ENCODE measurements at regions of chr11 and their contacts with region 1.

Region 1: DNA sequence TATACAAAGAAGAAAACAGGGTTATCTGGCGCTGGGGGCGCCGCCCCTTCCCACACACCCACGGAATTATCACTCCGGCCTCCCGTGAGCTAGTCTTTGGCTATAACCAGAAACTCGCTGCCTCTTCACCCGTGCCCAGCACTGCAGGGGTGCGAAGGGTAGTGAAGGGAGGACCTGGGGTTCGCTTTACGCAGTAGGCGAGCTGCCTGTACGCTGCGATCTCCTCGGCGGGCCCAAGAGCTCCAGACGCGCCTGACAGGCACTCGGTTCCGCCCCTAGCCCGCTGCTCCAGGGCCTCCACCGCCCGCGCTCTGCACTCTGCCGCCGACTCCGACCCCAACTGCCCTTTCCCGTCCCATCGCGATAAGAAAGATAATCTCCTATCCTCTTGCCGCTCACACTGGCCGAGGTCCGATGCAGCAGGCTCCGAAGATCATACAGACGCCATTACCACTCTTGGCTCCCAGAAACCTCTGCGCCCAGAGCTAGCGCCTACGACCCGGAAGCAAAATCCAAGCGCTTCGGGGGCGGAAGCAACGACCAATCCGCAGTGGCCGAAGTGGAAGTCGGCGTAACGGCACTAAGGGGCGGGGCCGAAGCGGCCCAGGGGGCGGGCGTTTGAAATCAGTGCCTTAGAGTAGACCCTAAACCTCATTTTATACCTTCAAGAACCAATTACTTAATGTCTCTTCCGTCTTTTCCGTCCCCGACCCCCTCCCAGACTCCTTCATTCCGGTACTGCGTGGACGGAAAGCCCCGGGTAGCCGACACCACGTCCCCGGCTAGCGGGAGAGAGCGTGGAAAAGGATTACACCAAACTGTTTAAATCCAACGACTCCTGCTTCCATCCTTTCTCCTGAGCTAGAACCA is at the starts of genes CWC15 and KDM4D:
- DNase-seq: peak; percentile 90 to 97 (median 91)
- H3K4me3 ChIP-seq: peak within 1 kb of the TSS; percentile 88
- H3K4me3 Mint-ChIP-seq: peak within 1 kb of the TSS; percentile 91 to 99 (median 96)
- H3K27ac ChIP-seq: peak within 1 kb of the TSS; percentile 82
- H3K27ac Mint-ChIP-seq: peak within 1 kb of the TSS; percentile 87 to 100 (median 97)
- H3K4me1 ChIP-seq: peaks cover 11% of the 10 kb centered on the region
- H3K4me1 Mint-ChIP-seq: peaks cover 24 to 55% (median 52%) of the 10 kb centered on the region in 3 donors
- H3K27me3 ChIP-seq: no peaks in the 10 kb centered on the region
- H3K27me3 Mint-ChIP-seq: no peaks in the 10 kb centered on the region
- total RNA-seq, gene CWC15: 96.6 to 100 TPM
- total RNA-seq, gene KDM4D: 1.6 to 1.8 TPM

Region 2: DNA sequence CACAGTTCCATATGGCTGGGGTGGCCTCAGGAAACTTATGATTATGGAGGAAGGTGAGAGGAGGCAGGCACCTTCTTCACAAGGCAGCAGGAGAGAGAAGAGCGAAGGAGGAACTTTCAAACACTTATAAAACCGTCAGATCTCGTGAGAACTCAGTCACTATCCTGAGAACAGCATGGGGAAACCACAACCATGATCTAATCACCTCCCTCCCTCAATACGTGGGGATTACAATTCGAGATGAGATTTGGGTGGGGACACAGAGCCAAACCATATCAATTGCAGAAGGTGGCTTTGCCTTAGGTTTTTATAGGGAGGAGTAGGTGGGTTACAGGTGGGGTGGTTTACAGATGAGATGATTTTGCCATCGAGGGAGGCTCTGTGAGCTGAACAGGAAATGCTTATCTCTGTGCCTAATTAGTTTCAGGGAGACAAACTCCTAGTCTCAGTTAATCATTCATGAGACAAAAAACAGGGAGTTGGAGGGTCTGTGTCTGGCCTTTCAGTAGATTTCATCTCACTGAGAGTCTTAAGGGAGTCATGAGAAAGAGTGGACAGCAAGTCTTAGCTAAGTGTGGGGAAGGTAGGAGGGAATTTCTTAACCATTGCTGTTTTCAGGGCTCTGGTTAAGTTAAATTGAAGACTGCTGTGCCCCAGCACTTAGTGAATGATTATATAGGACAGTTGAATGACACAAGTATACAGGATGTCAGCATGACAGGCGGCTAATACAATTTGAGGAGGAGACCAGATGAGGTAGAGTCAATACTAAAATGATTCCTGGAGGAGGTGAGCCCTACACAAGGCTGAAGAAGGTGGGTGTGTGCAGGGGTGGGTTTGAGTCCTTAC is 47.7 kb before region 1 on chr11:
- CTCF ChIA-PET with region 1: interaction called, 4 read pairs
- POLR2A ChIA-PET with region 1: interaction called, 15 read pairs
- DNase-seq: no peak
- H3K4me3 ChIP-seq: peak overlapping the region; percentile 33
- H3K4me3 Mint-ChIP-seq: peak overlapping the region in 6 of 7 donors; percentile 23 to 75 (median 66)
- H3K27ac ChIP-seq: no peak overlapping the region
- H3K27ac Mint-ChIP-seq: peak overlapping the region; percentile 67 to 98 (median 88)
- H3K4me1 ChIP-seq: peaks cover 39% of the 10 kb centered on the region
- H3K4me1 Mint-ChIP-seq: peaks cover 24 to 44% (median 32%) of the 10 kb centered on the region in 3 donors
- H3K27me3 ChIP-seq: no peaks in the 10 kb centered on the region
- H3K27me3 Mint-ChIP-seq: peaks cover 7 to 27% of the 10 kb centered on the region in 2 donors

Region 3: DNA sequence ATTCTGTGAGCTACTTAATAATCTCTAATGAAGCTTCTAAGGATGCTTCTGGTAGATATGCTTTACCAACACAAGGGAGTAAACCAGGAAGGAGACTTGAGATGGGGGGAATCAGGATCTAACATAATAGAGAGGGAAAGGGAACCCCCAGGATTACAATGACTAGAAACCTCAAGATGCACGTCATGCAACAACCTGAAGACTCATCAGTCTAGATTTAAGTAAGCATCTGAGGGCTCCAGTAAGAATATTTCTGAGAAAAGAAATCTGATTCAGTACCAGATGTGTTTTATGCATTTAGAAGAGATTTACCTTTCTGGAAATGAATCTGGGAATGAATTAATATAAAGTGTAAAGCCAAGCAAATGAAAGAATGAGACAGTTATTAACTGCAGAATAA is 15.4 kb after region 1 on chr11:
- CTCF ChIA-PET with region 1: no interaction called
- POLR2A ChIA-PET with region 1: no interaction called
- DNase-seq: no peak
- H3K4me3 ChIP-seq: no peak overlapping the region
- H3K4me3 Mint-ChIP-seq: no peak overlapping the region
- H3K27ac ChIP-seq: no peak overlapping the region
- H3K27ac Mint-ChIP-seq: no peak overlapping the region
- H3K4me1 ChIP-seq: no peaks in the 10 kb centered on the region
- H3K4me1 Mint-ChIP-seq: no peaks in the 10 kb centered on the region
- H3K27me3 ChIP-seq: peaks cover 3% of the 10 kb centered on the region
- H3K27me3 Mint-ChIP-seq: peaks cover 13 to 58% of the 10 kb centered on the region in 2 donors

Region 4: GRCh38 chr11:95089620-95090542 is 116.5 kb after region 1 on chr11 and contains the start of gene ENDOD1:
- CTCF ChIA-PET with region 1: interaction called, 5 read pairs
- POLR2A ChIA-PET with region 1: interaction called, 16 read pairs
- DNase-seq: peak; percentile 75 to 89 (median 84)
- H3K4me3 ChIP-seq: peak within 1 kb of the TSS; percentile 70
- H3K4me3 Mint-ChIP-seq: peak within 1 kb of the TSS; percentile 91 to 98 (median 93)
- H3K27ac ChIP-seq: peak within 1 kb of the TSS; percentile 78
- H3K27ac Mint-ChIP-seq: peak within 1 kb of the TSS; percentile 92 to 99 (median 98)
- H3K4me1 ChIP-seq: peaks cover 33% of the 10 kb centered on the region
- H3K4me1 Mint-ChIP-seq: peaks cover 46 to 58% (median 48%) of the 10 kb centered on the region in 3 donors
- H3K27me3 ChIP-seq: no peaks in the 10 kb centered on the region
- H3K27me3 Mint-ChIP-seq: no peaks in the 10 kb centered on the region
- total RNA-seq, gene ENDOD1: 29.6 to 30.1 TPM